ENCODE measurements at regions of chr16 and their contacts with region 1.

Region 1: GRCh38 chr16:89641458-89642119 is 15.9 kb downstream of the CHMP1A start:
- DNase-seq: no peak
- H3K4me3 ChIP-seq: no peak overlapping the region
- H3K27ac ChIP-seq: no peak overlapping the region
- H3K4me1 ChIP-seq: peaks cover 4% of the 10 kb centered on the region
- H3K27me3 ChIP-seq: no peaks in the 10 kb centered on the region
- CTCF ChIP-seq: no peak

Region 2: GRCh38 chr16:89574681-89575246 is 66.8 kb before region 1 on chr16:
- CTCF ChIA-PET with region 1: no interaction called
- POLR2A ChIA-PET with region 1: no interaction called
- intact Hi-C with region 1: loop called (anchors 1 kb)
- DNase-seq: peak; percentile 87
- H3K4me3 ChIP-seq: peak overlapping the region; percentile 66
- H3K27ac ChIP-seq: peak overlapping the region; percentile 77
- H3K4me1 ChIP-seq: peaks cover 17% of the 10 kb centered on the region
- H3K27me3 ChIP-seq: no peaks in the 10 kb centered on the region
- CTCF ChIP-seq: peak; percentile 61

Region 3: GRCh38 chr16:89593841-89594240 is 47.7 kb before region 1 on chr16:
- CTCF ChIA-PET with region 1: no interaction called
- POLR2A ChIA-PET with region 1: no interaction called
- intact Hi-C with region 1: no loop called
- DNase-seq: no peak
- H3K4me3 ChIP-seq: no peak overlapping the region
- H3K27ac ChIP-seq: no peak overlapping the region
- H3K4me1 ChIP-seq: no peaks in the 10 kb centered on the region
- H3K27me3 ChIP-seq: no peaks in the 10 kb centered on the region
- CTCF ChIP-seq: no peak

Measured in A673 (cell line).